ENCODE measurements at regions of chr18 and their contacts with region 1.

Region 1: DNA sequence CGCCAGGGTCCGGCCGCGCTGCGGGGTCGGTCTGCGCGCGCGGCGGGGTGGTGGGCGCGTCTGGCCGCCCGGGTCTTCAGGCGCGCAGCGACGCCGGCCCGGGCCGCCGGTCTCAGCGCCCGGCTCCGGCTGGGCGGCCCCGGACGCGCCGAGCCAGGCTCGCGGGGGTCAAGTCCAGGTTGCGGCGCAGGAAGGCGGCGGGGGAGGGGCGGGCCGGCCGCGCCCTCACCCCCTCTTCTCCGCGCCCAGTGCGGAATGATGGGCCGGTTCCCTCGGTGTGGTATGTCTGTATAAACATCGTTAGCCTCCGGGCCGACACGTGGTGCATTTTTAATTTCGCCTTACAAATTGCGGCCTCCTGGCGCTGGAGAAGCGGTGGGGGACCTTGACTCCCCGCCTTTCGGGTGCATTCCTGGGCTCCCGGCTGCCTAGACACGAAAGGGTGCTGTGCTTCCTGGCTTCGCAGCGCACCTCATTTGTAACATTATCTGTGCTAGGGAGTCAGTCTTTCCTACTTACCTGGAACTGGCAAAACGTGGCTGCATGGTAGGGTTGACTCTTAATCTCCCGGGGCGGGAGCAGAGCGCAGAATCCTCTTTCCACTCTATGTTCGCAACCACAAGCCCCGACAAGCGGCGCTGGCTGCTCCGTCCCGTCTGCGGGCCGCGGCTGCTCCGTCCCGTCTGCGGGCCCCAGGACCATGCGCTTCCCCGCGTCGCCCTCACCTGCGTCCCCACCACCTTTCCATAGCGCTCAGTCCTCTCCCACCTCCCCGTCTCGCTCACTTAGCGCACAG is 69.0 kb downstream of the CTAGE1 start:
- DNase-seq: peak; percentile 89
- ATAC-seq: peak; percentile 70

Region 2: DNA sequence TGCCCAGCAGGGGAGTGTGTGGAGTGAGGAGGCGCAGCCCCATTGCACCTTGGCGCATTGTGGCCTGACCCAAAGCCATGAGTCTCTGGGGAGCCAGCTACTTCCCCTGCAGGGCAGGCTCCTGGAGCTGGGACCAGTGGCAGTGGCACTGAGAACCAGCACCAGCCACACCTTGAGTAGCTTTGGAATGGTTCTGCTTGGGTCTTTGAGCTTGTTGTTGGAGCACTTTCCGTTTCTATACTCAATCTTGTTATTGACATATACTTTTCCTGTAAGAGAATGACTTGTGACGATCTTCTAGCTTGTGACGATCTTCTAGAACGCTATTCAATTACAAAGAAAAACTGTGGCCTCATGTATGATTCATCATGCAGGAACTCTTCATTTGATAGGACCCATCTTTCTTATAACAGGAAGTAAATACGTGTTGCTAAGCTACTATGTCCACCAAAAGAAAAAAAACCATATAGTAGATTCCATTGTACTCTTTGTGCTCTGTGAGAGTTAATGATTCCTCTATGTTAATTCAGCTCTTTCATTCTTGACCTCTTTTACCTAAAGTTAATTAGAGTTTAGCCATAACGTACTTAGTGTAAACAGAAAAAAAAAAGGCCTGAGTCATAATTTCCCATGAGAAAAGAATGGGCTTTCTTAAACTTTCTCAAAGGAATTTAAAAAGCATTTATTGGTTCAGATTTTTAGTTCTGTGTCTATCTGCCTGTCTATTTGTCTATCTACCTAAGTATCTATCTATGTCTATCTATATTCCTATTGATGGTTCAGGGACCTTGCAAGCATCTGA is 66.2 kb before region 1 on chr18:
- intact Hi-C with region 1: loop called (anchors 2 kb)
- DNase-seq: no peak
- ATAC-seq: no peak

Region 3: DNA sequence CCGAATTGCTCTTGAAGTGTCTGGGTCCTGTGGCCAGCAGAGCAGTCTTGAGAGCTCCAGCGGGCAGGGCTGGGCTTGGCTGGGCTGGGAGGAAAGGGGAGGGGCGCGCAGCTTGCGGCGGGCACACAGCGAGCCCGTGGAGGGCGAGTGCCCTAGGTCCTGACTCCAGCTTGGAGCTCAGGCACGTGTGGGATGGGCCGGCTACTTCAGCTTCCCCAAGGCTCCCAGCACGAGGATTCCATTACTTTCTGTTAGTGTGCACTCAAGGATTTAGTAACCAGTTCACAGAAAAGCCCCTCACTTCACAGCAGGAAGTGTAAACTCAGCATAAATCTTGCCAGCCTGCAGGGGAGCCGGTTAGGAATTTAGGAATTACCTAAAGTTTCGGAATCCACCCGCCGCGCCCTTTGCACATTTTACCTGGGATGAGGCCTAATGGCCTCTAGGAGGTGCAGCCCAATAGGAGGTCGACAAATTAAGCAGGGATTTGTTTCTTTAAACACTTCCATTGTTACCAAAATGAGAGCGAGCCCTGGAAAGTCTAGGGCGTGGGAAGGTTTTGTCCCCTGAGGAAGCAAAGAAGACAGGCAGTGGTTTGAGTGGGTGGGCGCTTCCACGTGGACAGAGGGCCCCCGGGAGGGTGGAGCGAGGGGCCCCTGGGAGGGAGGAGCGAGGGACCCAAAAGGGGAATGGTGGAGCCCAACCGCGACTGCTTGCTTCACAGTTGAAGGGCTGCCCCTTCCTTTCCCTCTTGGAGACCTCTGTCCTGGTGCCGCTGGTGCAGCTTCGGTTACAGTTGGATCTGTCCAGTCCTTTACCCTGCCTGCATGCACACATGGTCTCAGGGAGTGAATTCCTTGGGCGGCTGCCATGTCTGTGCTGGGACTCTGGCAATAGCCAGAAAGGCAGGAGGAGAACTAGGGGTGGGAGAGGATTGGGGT is 24.3 kb before region 1 on chr18:
- intact Hi-C with region 1: loop called (anchors 1 kb)
- DNase-seq: peak; percentile 85
- ATAC-seq: peak; percentile 84

Region 4: GRCh38 chr18:22399949-22400348 is 51.2 kb after region 1 on chr18:
- intact Hi-C with region 1: loop called (anchors 5 kb)
- DNase-seq: no peak
- ATAC-seq: peak; percentile 74

Region 5: DNA sequence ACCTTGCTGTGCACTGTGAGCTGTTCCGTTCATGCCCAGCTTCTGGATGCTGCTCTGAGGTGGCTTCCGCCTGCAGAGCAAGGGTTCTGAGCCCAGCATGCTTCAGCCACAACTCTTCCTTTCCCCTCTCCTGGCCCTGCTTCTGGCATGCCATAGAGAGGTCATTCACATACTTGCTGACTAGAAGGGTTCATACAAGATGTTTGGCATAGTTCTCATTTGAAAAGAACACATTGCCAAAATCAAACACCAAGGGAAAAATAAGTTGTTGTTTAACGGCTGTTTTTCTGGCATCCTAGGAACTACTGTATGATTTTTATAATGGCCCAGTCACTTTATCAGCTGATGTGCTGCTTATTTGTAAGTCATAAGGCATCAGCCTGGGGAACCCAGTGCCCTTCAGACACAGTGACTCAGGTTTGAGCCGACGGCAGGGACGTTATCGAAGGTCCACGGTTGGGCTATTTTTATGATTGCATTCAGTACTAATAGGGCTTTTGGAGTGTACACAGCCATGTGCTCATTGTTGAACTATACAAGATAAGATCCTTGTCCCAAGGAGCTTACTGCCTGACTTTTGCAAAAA is 122.9 kb after region 1 on chr18:
- intact Hi-C with region 1: loop called (anchors 5 kb)
- DNase-seq: peak; percentile 81
- ATAC-seq: peak; percentile 94

Region 6: DNA sequence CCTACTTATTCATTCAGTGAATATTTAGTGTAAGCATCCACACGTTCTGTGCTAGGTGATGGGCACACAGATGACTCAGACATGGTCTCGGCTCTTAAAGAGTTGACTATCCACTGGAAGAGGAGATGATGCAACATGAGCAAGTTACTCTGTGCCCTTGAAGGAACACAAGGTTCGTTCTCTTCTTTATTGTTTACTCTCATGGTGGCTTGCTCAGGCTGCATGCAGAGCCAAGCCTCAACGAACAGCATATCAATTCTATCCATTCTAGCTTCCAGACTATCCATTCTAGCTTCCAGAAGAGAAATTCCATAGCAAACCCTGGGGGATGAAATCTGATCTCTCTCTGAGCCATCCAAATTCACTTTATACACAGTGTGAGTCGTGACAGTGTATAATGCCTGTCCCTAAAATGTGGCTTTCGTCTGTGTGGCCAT is 137.1 kb after region 1 on chr18:
- intact Hi-C with region 1: no loop called
- DNase-seq: no peak
- ATAC-seq: no peak

Measured in Right ventricle myocardium inferior (tissue), 1 donor.